Common myeloid progenitor, CD34-positive (primary cell): ENCODE measurements at regions of chr11 and their contacts with region 1.

Region 1: DNA sequence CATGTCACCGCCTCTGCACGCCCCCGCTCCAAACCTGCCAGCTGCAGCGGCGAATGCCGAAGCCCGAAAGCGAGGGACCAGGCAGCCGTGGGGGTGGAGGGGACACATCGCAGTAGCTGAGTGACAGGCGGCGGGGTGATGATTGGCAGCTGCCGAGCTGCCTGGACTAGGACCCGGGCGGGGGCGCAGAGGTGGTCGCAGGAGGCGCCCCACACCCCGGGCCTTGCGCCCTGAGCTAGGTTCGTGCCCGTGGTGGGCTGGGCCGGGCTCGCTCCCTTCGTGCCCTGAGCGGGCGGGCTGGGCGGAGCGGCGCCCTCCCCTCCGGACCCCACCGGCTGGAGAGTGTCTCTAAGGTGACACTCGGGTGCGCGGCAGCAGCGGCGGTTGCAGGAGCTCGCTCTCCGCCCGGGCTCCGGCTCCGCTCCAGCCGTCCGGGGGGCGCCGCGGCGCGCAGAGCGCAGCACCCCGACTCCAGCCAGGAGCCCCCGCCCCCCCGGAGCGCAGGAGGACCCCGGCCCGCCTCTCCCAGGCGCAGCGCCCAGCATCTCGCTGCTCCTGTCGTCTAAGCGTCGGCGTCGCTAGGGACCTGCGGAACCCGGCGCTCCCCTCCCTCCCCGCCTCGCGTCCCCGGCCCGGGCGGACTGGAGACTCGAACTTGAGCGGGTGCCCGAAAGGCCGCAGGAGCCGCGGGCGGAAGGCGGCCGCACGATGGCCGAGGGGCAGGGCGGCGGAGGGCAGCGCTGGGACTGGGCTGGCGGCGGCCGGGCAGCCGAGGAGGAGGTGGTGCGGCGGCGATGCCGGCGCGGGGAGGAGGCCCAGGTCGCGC is 14.5 kb upstream of the DGKZ start:
- DNase-seq: peak in 1 of 3 donors; percentile 48
- H3K4me3 ChIP-seq: peak overlapping the region; percentile 34 to 76 (median 58)
- H3K27ac ChIP-seq: no peak overlapping the region
- H3K4me1 ChIP-seq: peaks cover 16 to 68% (median 56%) of the 10 kb centered on the region in 4 experiments
- H3K27me3 ChIP-seq: peaks cover 0 to 20% (median 7%) of the 10 kb centered on the region in 5 experiments

Region 2: DNA sequence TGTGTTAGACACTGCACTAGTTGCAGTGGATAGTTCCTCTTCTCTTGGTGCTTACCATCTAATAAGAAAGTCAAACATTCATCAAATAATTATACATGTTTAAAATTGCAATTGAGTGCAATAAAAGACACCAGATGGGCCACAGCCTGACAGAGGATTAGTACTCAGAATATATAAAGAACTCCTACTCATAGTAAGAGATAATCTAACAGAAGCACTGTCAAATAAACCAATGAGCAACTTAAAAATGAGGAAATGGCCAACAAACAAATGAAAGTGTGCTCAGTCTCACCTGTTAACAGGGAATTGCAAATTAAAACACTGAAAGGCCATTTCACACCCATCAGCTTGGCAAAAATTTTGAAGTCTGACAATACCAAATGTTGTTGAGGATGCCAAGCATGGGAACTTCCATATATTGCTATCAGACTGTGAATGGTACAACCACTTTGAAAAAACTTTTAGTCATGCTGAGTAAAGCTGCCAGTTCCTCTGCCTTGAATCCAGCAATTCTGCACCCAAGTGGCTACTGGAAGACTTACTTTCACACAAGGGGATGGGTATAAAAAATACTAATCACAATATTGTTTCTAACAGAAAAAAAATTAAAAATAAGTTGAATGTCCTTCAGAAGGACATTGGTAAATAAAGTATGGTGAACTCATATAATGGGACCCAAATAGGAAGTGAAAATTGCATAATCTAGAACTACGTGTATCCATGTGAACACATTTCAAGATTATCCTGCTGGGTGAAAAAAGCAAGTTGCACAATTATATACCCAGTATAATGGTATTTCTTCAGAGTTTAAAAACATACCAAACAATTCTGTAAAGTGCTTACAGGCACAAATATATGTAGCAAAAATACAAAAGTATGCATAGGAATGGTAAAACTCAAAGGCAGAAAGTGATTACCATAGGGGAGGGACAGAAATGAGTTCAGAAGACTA is 96.7 kb before region 1 on chr11:
- CTCF ChIA-PET with region 1: no interaction called
- POLR2A ChIA-PET with region 1: no interaction called
- DNase-seq: no peak
- H3K4me3 ChIP-seq: no peak overlapping the region
- H3K27ac ChIP-seq: no peak overlapping the region
- H3K4me1 ChIP-seq: peaks cover 0 to 26% (median 21%) of the 10 kb centered on the region in 4 experiments
- H3K27me3 ChIP-seq: peaks cover 0 to 25% (median 14%) of the 10 kb centered on the region in 5 experiments

Region 3: DNA sequence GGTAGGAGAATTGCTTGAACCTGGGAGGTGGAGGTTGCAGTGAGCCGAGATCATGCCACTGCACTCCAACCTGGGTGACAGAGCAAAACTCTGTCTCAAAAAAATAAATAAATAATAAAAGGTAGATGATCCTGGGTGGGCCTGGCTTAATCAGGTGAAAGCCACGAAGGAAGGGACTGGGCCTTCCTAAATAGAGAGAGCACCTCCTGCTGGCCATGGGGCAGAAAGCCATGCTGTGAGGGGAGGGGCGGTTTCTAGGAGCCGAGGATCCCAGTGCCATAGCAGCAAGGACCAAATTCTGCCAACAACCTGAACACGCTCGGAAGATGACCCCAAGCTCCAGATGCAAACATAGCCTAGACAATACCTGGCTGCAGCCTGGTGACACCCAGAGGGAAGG is 10.0 kb before region 1 on chr11:
- CTCF ChIA-PET with region 1: interaction called, 44 read pairs
- POLR2A ChIA-PET with region 1: interaction called, 4 read pairs
- DNase-seq: peak in 1 of 3 donors; percentile 39
- H3K4me3 ChIP-seq: no peak overlapping the region
- H3K27ac ChIP-seq: no peak overlapping the region
- H3K4me1 ChIP-seq: peaks cover 10 to 56% (median 31%) of the 10 kb centered on the region in 4 experiments
- H3K27me3 ChIP-seq: no peaks in the 10 kb centered on the region

Region 4: DNA sequence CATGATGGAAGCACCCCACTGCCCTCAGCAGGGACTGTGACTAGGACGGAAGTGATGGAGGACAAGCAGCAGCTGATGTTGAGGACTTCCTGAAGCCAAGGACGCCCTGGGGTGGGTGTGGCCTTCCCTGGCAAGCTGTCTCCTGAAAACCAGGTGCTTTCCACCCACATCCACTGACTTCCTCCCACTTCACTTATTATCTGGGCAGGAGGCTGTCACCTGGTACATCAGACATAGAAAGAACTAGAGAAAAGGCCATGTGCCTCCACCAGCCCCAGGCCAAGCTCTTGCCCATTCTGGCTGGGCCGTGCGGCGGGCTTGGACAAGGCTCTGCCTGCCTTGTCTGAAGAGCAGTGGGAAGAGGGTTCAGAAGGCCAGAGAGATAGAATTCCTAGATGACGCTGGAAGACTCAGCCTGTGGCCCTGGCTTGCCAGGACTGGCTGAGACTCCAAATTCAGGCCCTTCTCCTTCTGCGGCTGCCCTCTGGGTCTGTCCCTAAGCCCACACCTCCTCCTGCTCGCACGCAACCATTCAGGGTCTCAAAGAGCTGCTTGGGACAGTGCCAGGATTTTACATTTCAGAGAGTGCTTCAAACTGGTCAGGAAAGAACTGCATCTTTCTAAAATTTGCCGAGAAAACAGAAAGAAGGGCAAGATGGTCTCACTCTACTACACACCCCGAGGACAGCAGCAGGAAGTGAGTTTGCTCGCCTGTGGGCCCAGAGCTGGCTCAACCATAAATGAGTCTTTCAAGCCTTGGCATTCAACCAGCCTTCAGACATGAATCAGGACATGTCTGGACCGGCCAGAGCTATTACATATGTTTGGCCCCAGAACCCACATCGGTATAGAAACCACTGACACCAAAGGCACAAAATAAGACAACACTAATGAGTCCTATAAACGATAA is 354.4 kb after region 1 on chr11:
- CTCF ChIA-PET with region 1: no interaction called
- POLR2A ChIA-PET with region 1: no interaction called
- DNase-seq: no peak
- H3K4me3 ChIP-seq: no peak overlapping the region
- H3K27ac ChIP-seq: peak overlapping the region in 1 of 2 experiments; percentile 16
- H3K4me1 ChIP-seq: peaks cover 0 to 11% (median 0%) of the 10 kb centered on the region in 4 experiments
- H3K27me3 ChIP-seq: no peaks in the 10 kb centered on the region